ENCODE measurements at regions of chr4 and their contacts with region 1.

Region 1: GRCh38 chr4:75844151-75844662 is 58.0 kb downstream of the PPEF2 start:
- DNase-seq: no peak
- ATAC-seq: no peak
- H3K4me3 ChIP-seq: no peak overlapping the region
- H3K4me3 Mint-ChIP-seq: no peak overlapping the region
- H3K27ac ChIP-seq: no peak overlapping the region
- H3K27ac Mint-ChIP-seq: no peak overlapping the region
- H3K4me1 ChIP-seq: no peaks in the 10 kb centered on the region
- H3K4me1 Mint-ChIP-seq: peaks cover 0 to 22% (median 0%) of the 10 kb centered on the region in 7 donors
- H3K27me3 ChIP-seq: no peaks in the 10 kb centered on the region
- H3K27me3 Mint-ChIP-seq: no peaks in the 10 kb centered on the region

Region 2: GRCh38 chr4:75497133-75497532 is 347.1 kb before region 1 on chr4:
- CTCF ChIA-PET with region 1: no interaction called
- POLR2A ChIA-PET with region 1: no interaction called
- intact Hi-C with region 1: no loop called
- DNase-seq: no peak
- ATAC-seq: no peak
- H3K4me3 ChIP-seq: no peak overlapping the region
- H3K4me3 Mint-ChIP-seq: no peak overlapping the region
- H3K27ac ChIP-seq: no peak overlapping the region
- H3K27ac Mint-ChIP-seq: peak overlapping the region in 1 of 9 donors; percentile 34
- H3K4me1 ChIP-seq: no peaks in the 10 kb centered on the region
- H3K4me1 Mint-ChIP-seq: peaks cover 23 to 47% (median 43%) of the 10 kb centered on the region in 7 donors
- H3K27me3 ChIP-seq: no peaks in the 10 kb centered on the region
- H3K27me3 Mint-ChIP-seq: no peaks in the 10 kb centered on the region

Region 3: DNA sequence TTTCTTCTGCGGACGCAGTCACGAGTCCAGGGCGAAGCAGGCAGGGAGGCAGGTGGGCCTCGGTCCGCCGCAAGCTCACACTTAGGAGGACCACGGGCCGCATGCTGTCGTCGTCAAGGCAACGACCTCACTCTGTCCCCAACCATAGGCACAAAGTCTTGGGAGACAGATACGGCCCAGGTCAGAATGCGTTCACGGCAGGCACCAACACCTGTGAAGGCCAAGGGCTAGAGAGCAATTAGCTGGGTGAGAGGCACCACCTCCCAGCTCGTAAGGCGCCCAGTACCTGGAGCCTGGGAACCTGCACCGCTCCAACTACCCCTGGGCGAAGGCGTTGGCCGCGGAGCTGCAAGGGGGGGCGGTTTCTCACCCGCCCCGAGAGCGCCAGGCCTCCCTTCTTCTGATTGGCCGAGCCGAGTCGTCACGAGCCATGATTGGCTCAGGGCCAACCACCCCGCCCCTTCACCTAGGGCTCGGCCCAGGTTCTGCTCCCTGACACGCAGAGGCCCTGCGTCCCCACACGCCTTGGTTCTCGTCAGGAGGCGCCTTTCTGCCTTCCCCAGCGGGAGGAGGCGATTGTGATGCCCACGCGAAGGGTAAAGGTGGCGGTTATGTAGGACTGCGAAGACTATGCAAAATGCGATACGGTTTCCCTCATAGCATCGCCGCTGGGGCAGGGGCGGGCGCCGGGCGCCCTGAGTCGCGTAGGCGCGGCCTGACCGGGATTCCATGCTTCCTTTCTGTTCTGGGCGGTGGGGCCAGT is 213.9 kb before region 1 on chr4 and contains the start of gene CDKL2:
- CTCF ChIA-PET with region 1: no interaction called
- POLR2A ChIA-PET with region 1: no interaction called
- intact Hi-C with region 1: loop called in 1 of 2 experiments (anchors 10 kb)
- DNase-seq: peak; percentile 85 to 93 (median 91)
- ATAC-seq: peak; percentile 100
- H3K4me3 ChIP-seq: peak within 1 kb of the TSS; percentile 74
- H3K4me3 Mint-ChIP-seq: peak within 1 kb of the TSS; percentile 88 to 97 (median 94)
- H3K27ac ChIP-seq: peak within 1 kb of the TSS; percentile 73
- H3K27ac Mint-ChIP-seq: peak within 1 kb of the TSS; percentile 66 to 94 (median 86)
- H3K4me1 ChIP-seq: peaks cover 0 to 7% of the 10 kb centered on the region in 2 donors
- H3K4me1 Mint-ChIP-seq: peaks cover 6 to 18% (median 11%) of the 10 kb centered on the region in 7 donors
- H3K27me3 ChIP-seq: no peaks in the 10 kb centered on the region
- H3K27me3 Mint-ChIP-seq: peaks cover 0 to 12% (median 0%) of the 10 kb centered on the region in 5 donors
- total RNA-seq, gene CDKL2: 0.22 to 1.2 (median 0.34) TPM

Region 4: DNA sequence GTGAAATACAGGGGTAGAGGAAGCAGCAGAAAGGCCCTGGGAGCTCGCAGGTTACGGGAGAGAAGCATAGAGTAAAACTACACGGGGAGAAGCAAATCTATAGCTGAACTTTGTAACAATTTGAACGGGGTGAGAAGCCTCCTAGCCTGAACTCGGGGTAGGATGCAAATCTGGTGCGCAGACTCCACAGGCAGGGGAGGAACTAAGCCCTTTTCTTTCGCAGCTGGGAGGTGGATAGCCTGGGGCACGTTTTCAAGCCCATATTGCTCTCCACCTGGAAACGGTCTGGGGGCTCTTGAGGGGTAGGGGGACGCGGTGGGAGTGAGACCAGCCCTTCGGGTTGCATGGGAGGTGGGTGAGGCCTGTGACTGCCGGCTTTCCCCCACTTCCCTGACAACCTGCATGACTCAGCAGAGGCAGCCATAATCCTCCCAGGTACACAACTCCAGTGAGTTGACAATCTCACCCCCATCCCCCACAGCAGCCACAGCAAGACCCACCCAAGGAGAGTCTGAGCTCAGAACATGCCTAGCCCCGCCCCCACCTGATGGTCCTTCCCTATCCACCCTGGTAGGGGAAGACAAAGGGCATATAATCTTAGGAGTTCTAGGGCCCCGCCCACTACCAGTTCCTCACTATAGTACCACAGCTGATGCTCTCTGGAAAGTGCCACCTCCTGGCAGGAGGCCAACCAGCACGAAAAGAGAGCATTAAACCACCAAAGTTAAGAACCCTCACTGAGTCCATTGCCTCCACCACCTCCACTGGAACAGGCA is 1023.9 kb after region 1 on chr4:
- CTCF ChIA-PET with region 1: no interaction called
- POLR2A ChIA-PET with region 1: no interaction called
- intact Hi-C with region 1: no loop called
- DNase-seq: no peak
- ATAC-seq: no peak
- H3K4me3 ChIP-seq: no peak overlapping the region
- H3K4me3 Mint-ChIP-seq: no peak overlapping the region
- H3K27ac ChIP-seq: no peak overlapping the region
- H3K27ac Mint-ChIP-seq: no peak overlapping the region
- H3K4me1 ChIP-seq: no peaks in the 10 kb centered on the region
- H3K4me1 Mint-ChIP-seq: peaks cover 0 to 7% (median 2%) of the 10 kb centered on the region in 7 donors
- H3K27me3 ChIP-seq: no peaks in the 10 kb centered on the region
- H3K27me3 Mint-ChIP-seq: peaks cover 0 to 7% (median 0%) of the 10 kb centered on the region in 5 donors